ENCODE measurements at regions of chr3 and their contacts with region 1.

Region 1: GRCh38 chr3:27279123-27279522 is 90.1 kb downstream of the NEK10 start:
- DNase-seq: peak in 8 of 10 donors; percentile 14 to 85 (median 42)

Region 2: DNA sequence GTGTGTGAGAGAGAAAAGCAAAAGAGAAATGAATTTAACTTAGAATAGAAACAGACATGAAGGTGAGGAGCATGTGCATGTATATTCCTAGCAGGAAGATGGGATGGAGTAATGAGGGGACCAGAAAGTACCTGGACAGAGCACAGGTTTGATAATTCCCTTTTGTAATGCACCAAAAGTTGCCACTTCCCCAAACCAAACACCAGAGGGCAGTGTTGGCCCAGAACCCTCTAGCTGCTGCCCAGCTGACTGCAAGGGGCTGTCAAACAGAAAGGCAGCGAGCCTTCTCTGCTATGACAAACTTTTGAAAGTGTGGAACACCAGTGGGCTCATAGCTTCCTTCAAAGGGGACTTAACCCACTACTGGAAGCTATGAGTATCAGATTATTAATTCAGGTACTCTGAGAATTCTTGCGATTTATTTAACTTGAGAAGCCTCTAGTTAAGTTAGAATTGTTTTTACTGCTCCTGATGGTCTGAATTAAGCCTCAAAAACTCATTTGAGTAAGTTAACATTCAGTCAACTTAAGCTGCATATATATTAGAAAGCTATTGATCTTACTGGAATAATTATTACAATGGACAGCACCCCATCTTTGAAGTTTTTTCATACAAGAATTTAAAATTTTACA is 144.8 kb before region 1 on chr3:
- intact Hi-C with region 1: loop called (anchors 1 kb)
- DNase-seq: peak; percentile 39 to 94 (median 72)

Measured in posterior cingulate gyrus (tissue), 11 donors.